Naive thymus-derived CD4-positive, alpha-beta T cell (primary cell): ENCODE measurements at regions of chr12 and their contacts with region 1.

Region 1: GRCh38 chr12:32755654-32756475 is at the start of gene YARS2:
- DNase-seq: peak; percentile 62 to 86 (median 83)
- ATAC-seq: peak; percentile 92
- H3K4me3 ChIP-seq: peak within 1 kb of the TSS; percentile 68
- H3K4me3 Mint-ChIP-seq: peak within 1 kb of the TSS; percentile 84 to 99 (median 90)
- H3K27ac ChIP-seq: peak within 1 kb of the TSS; percentile 76
- H3K27ac Mint-ChIP-seq: peak within 1 kb of the TSS; percentile 81 to 99 (median 94)
- H3K4me1 ChIP-seq: peaks cover 13% of the 10 kb centered on the region in 2 donors
- H3K4me1 Mint-ChIP-seq: peaks cover 0 to 21% (median 20%) of the 10 kb centered on the region in 7 donors
- H3K27me3 ChIP-seq: no peaks in the 10 kb centered on the region
- H3K27me3 Mint-ChIP-seq: peaks cover 0 to 4% (median 0%) of the 10 kb centered on the region in 5 donors
- total RNA-seq, gene YARS2: 11.3 to 24.0 (median 17.9) TPM

Region 2: GRCh38 chr12:32365473-32366064 is 390.3 kb before region 1 on chr12:
- CTCF ChIA-PET with region 1: interaction called, 4 read pairs
- POLR2A ChIA-PET with region 1: interaction called, 3 read pairs
- intact Hi-C with region 1: loop called (anchors 1 kb)
- DNase-seq: peak in 7 of 9 donors; percentile 7 to 36 (median 23)
- ATAC-seq: peak; percentile 67
- H3K4me3 ChIP-seq: no peak overlapping the region
- H3K4me3 Mint-ChIP-seq: no peak overlapping the region
- H3K27ac ChIP-seq: no peak overlapping the region
- H3K27ac Mint-ChIP-seq: no peak overlapping the region
- H3K4me1 ChIP-seq: no peaks in the 10 kb centered on the region
- H3K4me1 Mint-ChIP-seq: no peaks in the 10 kb centered on the region
- H3K27me3 ChIP-seq: no peaks in the 10 kb centered on the region
- H3K27me3 Mint-ChIP-seq: no peaks in the 10 kb centered on the region

Region 3: DNA sequence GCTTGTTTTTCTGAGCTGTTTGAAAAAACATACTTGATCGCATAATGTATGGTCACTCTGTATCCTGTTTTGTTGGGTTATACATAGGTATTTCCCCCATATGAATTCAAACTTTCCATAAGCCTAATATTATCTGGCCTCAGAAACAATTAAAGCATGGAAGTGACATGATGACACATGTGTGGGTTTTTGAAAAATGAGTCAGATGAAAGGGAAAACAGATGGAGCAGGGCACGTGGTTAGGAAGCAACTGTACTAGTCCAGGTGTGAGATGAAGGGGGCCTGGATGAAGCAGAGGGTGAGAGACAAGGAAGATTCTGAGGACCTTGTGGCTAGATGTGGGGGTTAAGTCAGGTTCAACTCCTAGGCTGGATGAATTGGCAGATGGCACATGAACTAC is 169.5 kb before region 1 on chr12:
- CTCF ChIA-PET with region 1: no interaction called
- POLR2A ChIA-PET with region 1: no interaction called
- intact Hi-C with region 1: loop called in 1 of 2 experiments (anchors 10 kb)
- DNase-seq: no peak
- ATAC-seq: no peak
- H3K4me3 ChIP-seq: no peak overlapping the region
- H3K4me3 Mint-ChIP-seq: peak overlapping the region in 2 of 10 donors; percentile 3 to 46
- H3K27ac ChIP-seq: no peak overlapping the region
- H3K27ac Mint-ChIP-seq: peak overlapping the region in 3 of 9 donors; percentile 1 to 63 (median 40)
- H3K4me1 ChIP-seq: peaks cover 0 to 9% of the 10 kb centered on the region in 2 donors
- H3K4me1 Mint-ChIP-seq: peaks cover 22 to 58% (median 33%) of the 10 kb centered on the region in 7 donors
- H3K27me3 ChIP-seq: no peaks in the 10 kb centered on the region
- H3K27me3 Mint-ChIP-seq: no peaks in the 10 kb centered on the region

Region 4: GRCh38 chr12:33605751-33606150 is 849.9 kb after region 1 on chr12:
- CTCF ChIA-PET with region 1: no interaction called
- POLR2A ChIA-PET with region 1: no interaction called
- intact Hi-C with region 1: loop called (anchors 2 to 5 kb)
- DNase-seq: peak in 1 of 9 donors; percentile 2
- ATAC-seq: no peak
- H3K4me3 ChIP-seq: no peak overlapping the region
- H3K4me3 Mint-ChIP-seq: no peak overlapping the region
- H3K27ac ChIP-seq: no peak overlapping the region
- H3K27ac Mint-ChIP-seq: no peak overlapping the region
- H3K4me1 ChIP-seq: no peaks in the 10 kb centered on the region
- H3K4me1 Mint-ChIP-seq: no peaks in the 10 kb centered on the region
- H3K27me3 ChIP-seq: no peaks in the 10 kb centered on the region
- H3K27me3 Mint-ChIP-seq: no peaks in the 10 kb centered on the region

Region 5: GRCh38 chr12:34126239-34126641 is 1370.4 kb after region 1 on chr12:
- CTCF ChIA-PET with region 1: no interaction called
- POLR2A ChIA-PET with region 1: no interaction called
- intact Hi-C with region 1: loop called in 1 of 2 experiments (anchors 5 kb)
- DNase-seq: peak in 2 of 9 donors; percentile 6 to 16
- ATAC-seq: no peak
- H3K4me3 ChIP-seq: peak overlapping the region; percentile 26
- H3K4me3 Mint-ChIP-seq: peak overlapping the region; percentile 59 to 85 (median 70)
- H3K27ac ChIP-seq: no peak overlapping the region
- H3K27ac Mint-ChIP-seq: peak overlapping the region in 7 of 9 donors; percentile 24 to 88 (median 75)
- H3K4me1 ChIP-seq: peaks cover 0 to 5% of the 10 kb centered on the region in 2 donors
- H3K4me1 Mint-ChIP-seq: peaks cover 8 to 16% (median 10%) of the 10 kb centered on the region in 7 donors
- H3K27me3 ChIP-seq: no peaks in the 10 kb centered on the region
- H3K27me3 Mint-ChIP-seq: peaks cover 16 to 45% (median 23%) of the 10 kb centered on the region in 5 donors